Endothelial cell of umbilical vein (primary cell): ENCODE measurements at regions of chr3 and their contacts with region 1.

Region 1: GRCh38 chr3:180828723-180829408 is 83.6 kb upstream of the FXR1 start:
- DNase-seq: no peak
- H3K4me3 ChIP-seq: no peak overlapping the region
- H3K27ac ChIP-seq: no peak overlapping the region
- H3K4me1 ChIP-seq: no peaks in the 10 kb centered on the region
- H3K27me3 ChIP-seq: no peaks in the 10 kb centered on the region
- CTCF ChIP-seq: no peak
- POLR2A ChIP-seq: no peak

Region 2: DNA sequence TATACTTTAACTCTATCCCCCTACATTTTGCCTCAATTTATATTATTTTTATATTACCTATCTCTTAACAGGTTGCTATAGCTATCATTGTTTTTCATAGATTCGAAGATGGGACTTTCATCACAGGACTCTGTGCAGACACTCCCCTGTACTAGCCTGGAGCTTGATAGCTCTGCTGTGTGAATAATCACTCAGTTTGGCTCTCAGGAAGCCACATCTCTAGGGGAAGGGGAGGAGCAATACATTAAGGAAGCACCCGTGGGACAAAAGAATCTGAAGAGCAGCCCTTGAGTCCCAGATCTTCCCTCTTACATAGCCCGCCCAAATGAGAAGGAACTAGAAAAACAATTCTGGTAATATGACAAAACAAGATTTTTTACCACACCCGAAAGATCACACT is 30.7 kb before region 1 on chr3:
- CTCF ChIA-PET with region 1: no interaction called
- POLR2A ChIA-PET with region 1: no interaction called
- dilution Hi-C with region 1: no loop called
- intact Hi-C with region 1: no loop called
- DNase-seq: no peak
- H3K4me3 ChIP-seq: no peak overlapping the region
- H3K27ac ChIP-seq: no peak overlapping the region
- H3K4me1 ChIP-seq: no peaks in the 10 kb centered on the region
- H3K27me3 ChIP-seq: no peaks in the 10 kb centered on the region
- CTCF ChIP-seq: no peak
- POLR2A ChIP-seq: no peak

Region 3: GRCh38 chr3:180898572-180898971 is 69.7 kb after region 1 on chr3:
- CTCF ChIA-PET with region 1: no interaction called
- POLR2A ChIA-PET with region 1: interaction called, 13 read pairs
- dilution Hi-C with region 1: no loop called
- intact Hi-C with region 1: no loop called
- DNase-seq: no peak
- H3K4me3 ChIP-seq: no peak overlapping the region
- H3K27ac ChIP-seq: no peak overlapping the region
- H3K4me1 ChIP-seq: no peaks in the 10 kb centered on the region
- H3K27me3 ChIP-seq: no peaks in the 10 kb centered on the region
- CTCF ChIP-seq: no peak
- POLR2A ChIP-seq: no peak